Dendritic cell treated with granulocyte-macrophage colony-stimulating factor and Interleukin-4, amounts not matched to agents 40 ng/mL and 50 ng/mL, for 4 days (primary cell): ENCODE measurements at regions of chr5 and their contacts with region 1.

Region 1: DNA sequence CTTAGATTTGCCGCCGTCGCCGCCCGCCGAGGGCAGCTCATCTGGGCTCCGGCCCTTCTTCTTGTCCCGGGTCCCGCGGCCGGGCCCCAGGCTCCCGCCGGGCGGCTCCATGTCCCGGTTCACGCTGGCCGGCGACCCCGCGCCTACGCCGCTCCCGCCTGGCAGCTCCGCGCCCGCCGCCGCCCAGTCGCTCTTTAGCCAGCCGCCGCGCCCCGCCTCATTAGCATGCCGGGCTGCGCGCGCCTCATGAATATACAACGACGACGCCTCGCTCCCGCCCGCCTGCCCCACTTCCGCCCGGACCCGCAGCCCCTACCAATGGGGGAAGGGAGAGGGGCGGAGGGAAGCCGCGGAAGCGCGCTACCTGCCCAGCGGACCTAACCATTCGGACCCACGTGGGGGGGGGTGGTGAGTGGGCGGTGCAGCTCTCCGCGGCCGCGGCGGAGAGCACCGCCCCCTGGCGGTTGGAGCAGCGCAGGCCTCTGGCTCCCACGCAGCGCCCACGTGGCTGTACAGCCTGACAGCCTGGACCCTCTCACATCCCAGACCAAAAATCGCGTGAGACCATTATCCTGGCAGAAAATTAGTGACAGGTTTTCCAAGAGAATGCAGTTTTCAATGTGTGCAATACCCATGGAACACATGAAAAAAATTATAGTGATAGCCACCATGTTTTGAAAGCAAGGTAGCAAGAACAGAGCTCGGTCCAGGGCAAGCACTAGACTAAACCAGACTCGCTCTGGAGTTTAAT is at the start of gene DIAPH1:
- H3K4me3 Mint-ChIP-seq: peak within 1 kb of the TSS; percentile 92
- H3K27ac Mint-ChIP-seq: peak within 1 kb of the TSS; percentile 92
- H3K4me1 Mint-ChIP-seq: peaks cover 70% of the 10 kb centered on the region
- H3K27me3 Mint-ChIP-seq: no peaks in the 10 kb centered on the region

Region 2: DNA sequence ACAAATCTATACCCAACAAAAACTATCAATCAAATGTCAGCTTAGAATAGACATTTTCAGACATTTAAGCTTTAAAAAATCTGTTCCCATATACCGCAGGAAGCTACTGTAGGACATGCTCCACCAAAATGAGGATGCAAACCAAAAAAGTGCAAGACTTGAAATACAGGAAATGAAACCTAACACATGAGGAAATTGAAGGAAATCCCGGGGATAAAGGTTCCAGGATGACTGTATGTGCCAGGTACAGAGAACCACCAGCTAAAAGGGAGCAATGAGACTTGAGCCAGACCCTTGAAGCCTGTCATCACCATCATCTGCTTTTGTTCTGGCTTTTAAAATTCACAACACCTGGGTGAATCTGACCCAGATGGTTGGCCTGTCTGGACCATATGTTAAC is 21.6 kb before region 1 on chr5:
- intact Hi-C with region 1: loop called (anchors 1 kb)
- H3K4me3 Mint-ChIP-seq: no peak overlapping the region
- H3K27ac Mint-ChIP-seq: no peak overlapping the region
- H3K4me1 Mint-ChIP-seq: peaks cover 55% of the 10 kb centered on the region
- H3K27me3 Mint-ChIP-seq: no peaks in the 10 kb centered on the region

Region 3: GRCh38 chr5:141605523-141606277 is 13.3 kb before region 1 on chr5:
- intact Hi-C with region 1: loop called (anchors 2 kb)
- H3K4me3 Mint-ChIP-seq: peak overlapping the region; percentile 44
- H3K27ac Mint-ChIP-seq: peak overlapping the region; percentile 96
- H3K4me1 Mint-ChIP-seq: peaks cover 68% of the 10 kb centered on the region
- H3K27me3 Mint-ChIP-seq: no peaks in the 10 kb centered on the region

Region 4: DNA sequence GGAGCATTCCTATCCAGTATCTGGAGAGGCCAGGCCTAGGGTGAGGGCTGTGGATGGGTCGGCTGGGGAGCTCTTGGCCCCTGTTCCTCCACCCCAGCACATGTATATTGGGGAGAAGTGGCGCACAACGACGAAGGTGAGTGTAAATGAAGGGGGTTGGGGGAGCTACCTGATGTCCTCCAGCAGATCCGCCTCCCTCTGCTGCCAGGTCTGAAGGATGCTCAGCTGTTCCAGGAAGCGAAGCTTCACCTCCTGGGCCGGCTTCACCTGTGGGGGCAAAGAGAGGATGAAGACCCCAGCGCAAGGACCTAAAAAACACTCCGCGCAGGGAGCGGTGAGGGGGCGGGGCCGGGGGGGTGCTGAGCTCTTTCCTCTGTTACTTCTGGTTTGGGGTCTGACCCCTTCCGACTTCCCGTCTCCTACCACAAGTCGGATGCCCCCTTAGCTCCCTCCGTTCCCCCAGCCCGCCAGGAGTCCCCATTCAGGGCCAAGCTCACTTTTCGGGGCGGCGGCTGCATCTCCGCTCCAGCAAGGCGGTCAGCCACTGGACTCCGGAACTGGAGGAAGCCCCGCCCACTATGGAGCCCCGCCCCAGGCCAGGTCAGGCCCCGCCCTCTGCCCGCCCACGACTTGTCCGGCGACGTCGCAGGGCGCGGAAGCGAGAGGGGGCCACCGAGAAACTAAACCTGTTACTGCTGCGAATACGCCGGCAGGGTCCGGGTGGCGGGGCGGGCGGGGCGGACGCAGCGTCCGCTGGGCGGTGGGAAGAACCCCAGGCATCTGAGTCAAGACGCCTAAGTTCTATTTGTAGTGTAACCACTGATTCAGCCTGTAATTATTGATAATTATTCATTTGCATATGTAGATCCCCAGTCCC is 32.1 kb after region 1 on chr5 and contains the start of gene FCHSD1:
- intact Hi-C with region 1: no loop called
- H3K4me3 Mint-ChIP-seq: peak within 1 kb of the TSS; percentile 99
- H3K27ac Mint-ChIP-seq: peak within 1 kb of the TSS; percentile 84
- H3K4me1 Mint-ChIP-seq: peaks cover 36% of the 10 kb centered on the region
- H3K27me3 Mint-ChIP-seq: peaks cover 7% of the 10 kb centered on the region